Tibial artery (tissue), 4 donors: ENCODE measurements at regions of chr17 and their contacts with region 1.

Region 1: DNA sequence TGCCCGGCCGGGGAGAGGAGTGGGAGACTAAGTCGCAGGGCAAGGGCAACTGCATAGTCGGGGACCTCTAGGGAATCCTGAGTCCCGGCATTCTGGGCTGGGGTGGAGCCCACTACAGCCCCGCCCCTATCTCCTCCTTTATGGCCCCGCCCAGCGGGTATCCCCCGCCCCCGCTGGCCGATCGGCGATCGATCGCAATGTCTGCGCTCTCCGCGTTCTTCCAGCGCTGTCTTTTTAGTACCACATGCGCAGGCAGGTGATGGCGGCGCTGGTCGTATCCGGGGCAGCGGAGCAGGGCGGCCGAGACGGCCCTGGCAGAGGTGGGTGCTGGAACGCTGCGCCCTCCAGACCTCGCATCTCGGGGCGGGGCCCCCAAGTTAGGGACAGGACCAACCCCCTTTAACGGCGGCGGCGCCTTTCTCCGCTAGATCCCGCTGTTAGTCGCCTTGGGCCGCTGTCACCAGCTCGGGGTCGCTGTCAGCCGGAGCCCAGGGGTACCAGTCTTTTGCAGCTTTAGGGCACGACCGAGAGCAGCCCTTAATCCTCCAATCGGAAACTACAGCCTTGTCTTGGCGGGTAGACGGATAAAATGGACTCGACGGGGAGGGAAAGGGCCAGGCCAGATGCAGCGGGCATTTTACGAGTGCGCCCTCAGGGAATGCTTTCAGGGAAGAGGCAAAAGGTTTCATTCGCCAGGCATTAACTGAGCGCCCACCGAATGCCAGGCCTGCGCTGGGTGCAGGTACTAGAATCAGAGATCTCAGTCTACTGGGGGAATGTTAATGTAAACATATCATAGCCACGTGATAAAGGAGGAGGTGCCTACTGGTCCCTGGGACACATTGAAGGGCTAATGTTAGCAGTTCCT is at the start of gene DPH1:
- DNase-seq: peak; percentile 86 to 92
- H3K4me3 ChIP-seq: peak within 1 kb of the TSS; percentile 87 to 96
- H3K27ac ChIP-seq: peak within 1 kb of the TSS; percentile 72 to 77
- H3K4me1 ChIP-seq: peaks cover 0 to 40% (median 30%) of the 10 kb centered on the region in 4 donors
- H3K27me3 ChIP-seq: peaks cover 0 to 44% of the 10 kb centered on the region in 2 donors
- CTCF ChIP-seq: no peak

Region 2: DNA sequence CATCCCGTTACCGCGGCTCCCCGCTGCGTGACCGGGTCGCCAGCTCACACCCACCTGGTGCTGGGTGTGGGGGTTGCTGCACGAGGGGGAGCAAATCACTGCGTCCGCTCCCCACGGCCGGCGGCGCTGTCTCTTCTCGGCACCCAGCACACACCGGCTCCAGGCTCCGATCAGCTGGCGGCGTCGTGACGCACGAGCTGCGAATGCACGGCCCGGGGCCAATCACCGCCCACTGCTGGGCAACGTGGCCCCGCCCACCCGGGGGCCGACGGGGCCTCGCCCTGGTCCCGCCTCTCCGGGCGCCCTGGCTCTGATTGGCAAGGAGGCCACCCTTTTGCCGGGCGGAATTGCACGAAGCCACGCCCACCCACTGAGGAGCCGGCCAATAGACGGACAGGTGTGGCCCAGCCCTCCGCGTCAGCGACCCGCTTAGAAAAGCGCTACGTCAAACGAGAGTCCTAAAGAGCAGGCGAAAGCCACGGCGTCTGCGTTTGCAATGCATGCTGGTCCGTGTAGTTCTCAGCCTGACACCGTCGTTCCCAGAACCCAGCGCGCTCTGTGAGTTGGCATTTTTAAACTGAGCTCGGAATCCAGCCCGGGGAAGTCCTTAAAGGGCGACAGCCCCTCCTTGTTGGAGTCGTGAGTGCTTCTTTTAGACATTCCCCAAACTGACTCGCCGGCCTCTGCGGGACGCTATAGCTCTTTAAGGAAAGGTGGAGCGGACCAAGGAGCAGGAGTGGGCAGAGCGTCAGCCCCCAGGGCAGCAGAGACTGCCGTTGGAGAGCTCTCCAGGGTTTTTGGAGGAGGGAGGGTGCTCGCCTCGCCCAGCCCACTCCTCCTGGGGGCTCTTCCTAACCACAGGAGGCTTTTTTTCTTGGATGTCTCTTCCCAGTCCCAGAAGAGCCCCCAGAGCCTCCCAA is 313.8 kb before region 1 on chr17:
- intact Hi-C with region 1: loop called (anchors 10 kb)
- DNase-seq: peak; percentile 99 to 100
- H3K4me3 ChIP-seq: peak overlapping the region; percentile 92 to 95
- H3K27ac ChIP-seq: peak overlapping the region; percentile 98 to 100
- H3K4me1 ChIP-seq: peaks cover 0 to 53% (median 42%) of the 10 kb centered on the region in 4 donors
- H3K27me3 ChIP-seq: no peaks in the 10 kb centered on the region
- CTCF ChIP-seq: no peak

Region 3: DNA sequence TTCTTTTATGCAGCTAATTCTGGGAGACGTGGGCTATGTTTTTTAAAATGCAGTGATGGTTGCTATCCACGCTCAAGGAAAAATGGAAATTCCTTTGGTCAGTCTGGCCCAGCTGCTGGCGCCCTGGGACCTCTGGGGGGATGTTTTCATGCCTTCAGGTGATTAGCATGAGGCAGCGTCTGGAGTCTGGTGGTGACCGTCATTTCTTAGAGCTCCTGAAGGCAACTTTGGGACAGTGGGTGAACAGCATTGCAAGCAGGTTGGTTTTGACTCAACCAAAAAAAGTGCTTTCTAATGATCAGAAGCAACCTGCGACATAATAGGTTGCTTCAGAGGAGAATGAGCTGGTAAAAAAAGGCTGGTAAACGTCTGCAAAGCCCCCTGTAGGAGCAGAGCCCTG is 118.0 kb before region 1 on chr17:
- intact Hi-C with region 1: loop called (anchors 5 kb)
- DNase-seq: no peak
- H3K4me3 ChIP-seq: no peak overlapping the region
- H3K27ac ChIP-seq: no peak overlapping the region
- H3K4me1 ChIP-seq: peaks cover 0 to 14% (median 12%) of the 10 kb centered on the region in 4 donors
- H3K27me3 ChIP-seq: peaks cover 0 to 88% of the 10 kb centered on the region in 2 donors
- CTCF ChIP-seq: no peak